SK-N-SH (cell line): ENCODE measurements at regions of chr15 and their contacts with region 1.

Region 1: GRCh38 chr15:65869127-65869953 is at the start of gene RAB11A:
- DNase-seq: peak; percentile 95
- H3K4me3 ChIP-seq: peak within 1 kb of the TSS; percentile 80 to 97
- H3K27ac ChIP-seq: peak within 1 kb of the TSS; percentile 91 to 93
- H3K4me1 ChIP-seq: peaks cover 0 to 5% of the 10 kb centered on the region in 2 experiments; a peak in 2 of 4 replicates
- H3K27me3 ChIP-seq: no peaks in the 10 kb centered on the region
- CTCF ChIP-seq: peak; percentile 45
- EP300 ChIP-seq: peak in 1 of 2 experiments; percentile 22; a peak in 1 of 4 replicates
- RAD21 ChIP-seq: peak; percentile 27; the same call in 1 of the 2 replicates
- polyA plus RNA-seq, gene RAB11A: 293 and 352 TPM in 2 replicates

Region 2: GRCh38 chr15:65610871-65611718 is 258.2 kb before region 1 on chr15 and contains the start of gene INTS14:
- CTCF ChIA-PET with region 1: interaction called, 5 read pairs
- POLR2A ChIA-PET with region 1: interaction called, 15 read pairs
- DNase-seq: peak; percentile 98
- H3K4me3 ChIP-seq: peak within 1 kb of the TSS; percentile 77 to 99
- H3K27ac ChIP-seq: peak within 1 kb of the TSS; percentile 83 to 93
- H3K4me1 ChIP-seq: peaks cover 14 to 16% of the 10 kb centered on the region in 2 experiments; a peak in 3 of 4 replicates
- H3K27me3 ChIP-seq: no peaks in the 10 kb centered on the region
- CTCF ChIP-seq: peak; percentile 54
- EP300 ChIP-seq: peak in 1 of 2 experiments; percentile 44; a peak in 1 of 4 replicates
- RAD21 ChIP-seq: peak; percentile 63
- polyA plus RNA-seq, gene INTS14: 44.9 and 55.5 TPM in 2 replicates

Region 3: DNA sequence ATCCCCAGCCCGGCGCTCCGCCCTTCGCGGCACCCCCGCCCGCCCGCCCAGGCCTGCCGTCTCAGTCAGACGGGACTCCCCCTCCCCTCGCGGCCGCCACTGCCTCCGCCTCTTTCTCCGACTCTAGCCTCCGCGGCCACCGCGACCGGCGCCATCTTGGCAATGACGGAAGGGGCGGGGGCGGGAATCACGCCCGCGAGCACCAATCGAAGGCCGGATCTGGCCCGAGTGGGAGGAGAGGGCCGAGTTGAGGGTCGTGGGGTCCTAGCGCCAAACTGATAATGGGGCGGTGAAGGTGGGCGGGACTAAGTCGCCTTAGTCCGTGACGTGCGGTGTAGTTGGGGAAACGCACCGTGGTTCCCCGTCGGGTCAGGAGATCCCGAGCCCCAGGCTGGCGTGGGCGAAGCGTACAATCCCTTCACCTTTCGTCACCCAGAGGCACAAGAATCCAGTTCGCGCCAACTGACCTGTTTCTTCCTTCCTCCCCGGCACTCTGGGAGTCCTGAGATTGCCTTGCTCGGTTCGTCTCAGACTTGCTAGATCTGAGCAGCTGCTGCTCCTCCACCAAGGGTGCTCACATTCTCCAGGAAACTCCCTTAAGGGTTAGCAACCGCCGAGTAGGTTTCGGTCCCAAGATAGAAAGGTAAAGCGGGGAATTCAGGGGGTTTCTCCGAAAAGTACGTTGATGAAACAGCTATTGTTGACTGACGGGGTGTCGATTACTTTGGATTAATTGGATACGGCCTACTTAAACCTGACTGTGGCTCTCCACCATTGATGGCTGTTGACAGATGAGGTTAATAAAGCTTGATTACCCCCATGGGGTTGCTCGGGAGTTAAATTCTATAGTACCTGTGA is 77.0 kb before region 1 on chr15 and contains the start of gene DENND4A:
- CTCF ChIA-PET with region 1: no interaction called
- POLR2A ChIA-PET with region 1: interaction called, 12 read pairs
- DNase-seq: peak; percentile 95
- H3K4me3 ChIP-seq: peak within 1 kb of the TSS; percentile 76 to 79
- H3K27ac ChIP-seq: peak within 1 kb of the TSS; percentile 73 to 83
- H3K4me1 ChIP-seq: peaks cover 0 to 6% of the 10 kb centered on the region in 2 experiments; a peak in 3 of 4 replicates
- H3K27me3 ChIP-seq: no peaks in the 10 kb centered on the region
- CTCF ChIP-seq: no peak
- EP300 ChIP-seq: peak in 1 of 2 experiments; percentile 44; a peak in 1 of 4 replicates
- RAD21 ChIP-seq: no peak
- polyA plus RNA-seq, gene DENND4A: 2.5 and 3.2 TPM in 2 replicates

Region 4: DNA sequence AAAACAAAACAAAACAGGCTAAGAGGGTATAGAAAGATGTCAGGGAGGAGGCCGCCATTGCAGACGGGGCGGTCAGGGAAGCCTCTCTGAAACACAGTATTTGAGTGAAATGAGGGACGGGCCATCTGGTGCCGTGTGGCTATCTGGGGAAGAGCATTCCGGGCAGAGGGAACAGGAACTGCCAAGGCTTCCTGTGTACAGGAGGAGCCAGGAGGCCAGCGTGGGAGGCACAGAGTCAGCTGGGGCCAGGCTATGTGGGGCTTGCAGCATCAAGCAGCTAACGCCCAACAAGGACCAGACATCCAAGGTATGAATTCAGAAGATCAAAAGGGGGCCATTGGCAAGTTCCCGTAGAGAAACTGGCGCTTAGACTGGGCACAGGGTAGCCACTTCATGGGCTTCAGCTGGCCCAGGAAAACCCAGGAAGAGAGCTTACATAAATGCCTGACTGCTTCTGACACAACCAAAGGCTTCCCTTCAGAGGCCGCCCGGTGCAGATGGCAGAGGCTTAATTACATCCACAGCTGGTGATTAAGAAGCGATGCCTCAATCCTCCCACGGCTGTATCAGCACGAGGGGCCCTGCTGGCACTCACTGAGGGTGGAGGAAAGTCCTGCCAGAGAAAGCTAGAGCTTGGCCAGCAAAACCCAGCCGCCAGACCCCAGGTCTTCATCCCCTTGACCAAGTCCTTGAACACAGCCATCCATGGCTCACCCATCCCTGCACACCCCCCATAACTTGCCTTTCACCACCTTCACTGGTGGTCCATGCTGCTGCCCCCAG is 239.3 kb after region 1 on chr15:
- CTCF ChIA-PET with region 1: no interaction called
- POLR2A ChIA-PET with region 1: no interaction called
- DNase-seq: no peak
- H3K4me3 ChIP-seq: no peak overlapping the region
- H3K27ac ChIP-seq: no peak overlapping the region
- H3K4me1 ChIP-seq: no peaks in the 10 kb centered on the region
- H3K27me3 ChIP-seq: peaks cover 46% of the 10 kb centered on the region
- CTCF ChIP-seq: no peak
- EP300 ChIP-seq: no peak
- RAD21 ChIP-seq: no peak